A673 (cell line): ENCODE measurements at regions of chr11 and their contacts with region 1.

Region 1: GRCh38 chr11:76680518-76681425 is 10.2 kb upstream of the LRRC32 start:
- DNase-seq: peak; percentile 85
- H3K4me3 ChIP-seq: no peak overlapping the region
- H3K27ac ChIP-seq: no peak overlapping the region
- H3K4me1 ChIP-seq: no peaks in the 10 kb centered on the region
- H3K27me3 ChIP-seq: no peaks in the 10 kb centered on the region
- CTCF ChIP-seq: peak; percentile 96

Region 2: GRCh38 chr11:75896843-75897419 is 783.8 kb before region 1 on chr11:
- CTCF ChIA-PET with region 1: no interaction called
- POLR2A ChIA-PET with region 1: no interaction called
- intact Hi-C with region 1: loop called (anchors 10 kb)
- DNase-seq: peak; percentile 75
- H3K4me3 ChIP-seq: no peak overlapping the region
- H3K27ac ChIP-seq: no peak overlapping the region
- H3K4me1 ChIP-seq: no peaks in the 10 kb centered on the region
- H3K27me3 ChIP-seq: no peaks in the 10 kb centered on the region
- CTCF ChIP-seq: peak; percentile 81

Region 3: DNA sequence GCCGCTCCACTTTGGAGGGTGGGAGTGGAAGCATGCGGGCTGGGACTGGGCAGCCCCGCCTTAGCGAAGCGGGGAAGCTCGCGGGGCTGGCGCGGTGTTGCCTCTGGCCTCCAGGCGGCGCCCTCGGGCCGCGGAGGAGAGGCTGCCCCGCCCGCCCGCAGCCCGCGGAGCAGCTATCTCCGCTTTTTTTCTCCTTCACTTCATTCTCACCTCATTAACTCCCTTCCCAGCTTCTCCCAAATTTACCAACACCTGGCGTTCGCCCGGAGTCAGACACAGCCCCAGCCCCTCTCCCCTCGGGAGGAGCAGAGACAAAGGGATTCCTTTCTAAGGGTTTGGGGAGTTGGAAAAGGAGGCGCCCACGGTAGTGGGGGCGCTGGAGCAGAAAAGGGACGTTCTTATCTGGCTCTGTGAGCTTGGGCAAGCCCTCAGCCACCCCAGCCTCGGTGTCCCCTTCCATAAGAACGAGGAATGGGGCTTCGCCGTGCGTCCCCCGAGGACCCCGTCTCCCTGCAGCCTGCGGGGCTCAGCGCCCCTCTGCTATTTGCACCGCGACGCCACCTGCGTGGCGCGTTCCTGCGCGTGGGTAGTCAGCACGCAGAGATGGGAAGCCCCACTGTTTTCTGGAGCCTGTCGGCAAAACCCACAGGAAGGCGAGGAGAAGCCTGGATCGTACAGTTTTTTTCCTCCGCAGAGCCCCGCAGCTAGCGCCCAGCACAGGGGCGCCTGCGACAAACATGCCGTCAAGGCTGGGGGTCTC is 472.9 kb before region 1 on chr11:
- CTCF ChIA-PET with region 1: interaction called, 4 read pairs
- POLR2A ChIA-PET with region 1: no interaction called
- intact Hi-C with region 1: loop called (anchors 2 kb)
- DNase-seq: peak; percentile 93
- H3K4me3 ChIP-seq: peak overlapping the region; percentile 56
- H3K27ac ChIP-seq: no peak overlapping the region
- H3K4me1 ChIP-seq: peaks cover 34% of the 10 kb centered on the region
- H3K27me3 ChIP-seq: peaks cover 69% of the 10 kb centered on the region
- CTCF ChIP-seq: peak; percentile 93

Region 4: DNA sequence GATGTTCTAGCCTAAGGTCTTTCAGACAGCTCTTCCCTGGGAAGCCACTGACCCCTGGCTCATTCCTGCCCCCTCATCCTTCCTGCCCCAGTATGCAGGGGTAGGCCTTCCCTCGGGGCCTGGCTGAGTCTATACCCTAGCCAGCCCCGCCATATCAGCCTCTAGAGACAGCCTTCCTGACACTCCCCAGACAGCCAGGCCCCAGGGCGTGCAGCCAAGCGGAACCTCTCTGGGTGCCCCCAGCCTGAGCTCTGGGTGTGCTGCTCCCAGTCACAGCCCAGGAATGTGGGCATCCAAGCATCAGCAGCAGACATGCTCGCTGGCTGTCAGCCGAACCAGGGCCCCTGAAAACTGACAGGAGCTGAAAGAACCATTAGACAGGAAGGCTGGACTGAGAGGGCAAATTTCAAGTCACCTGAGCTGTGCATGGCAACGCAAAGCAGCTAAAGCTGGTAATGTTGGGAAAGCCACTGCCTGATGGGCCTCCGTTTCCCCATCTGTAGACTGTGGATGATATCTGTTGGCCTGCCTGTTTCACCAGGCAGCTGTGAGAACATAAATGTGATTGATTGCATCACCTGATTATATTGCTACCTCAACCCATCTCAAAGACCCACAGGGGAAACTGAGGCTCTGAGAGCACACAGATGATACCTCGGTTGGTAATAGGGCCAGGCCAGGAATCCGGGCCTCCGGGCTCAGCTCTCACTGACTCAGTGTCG is 103.4 kb before region 1 on chr11:
- CTCF ChIA-PET with region 1: interaction called, 6 read pairs
- POLR2A ChIA-PET with region 1: no interaction called
- intact Hi-C with region 1: loop called (anchors 10 kb)
- DNase-seq: peak; percentile 79
- H3K4me3 ChIP-seq: no peak overlapping the region
- H3K27ac ChIP-seq: peak overlapping the region; percentile 11
- H3K4me1 ChIP-seq: no peaks in the 10 kb centered on the region
- H3K27me3 ChIP-seq: no peaks in the 10 kb centered on the region
- CTCF ChIP-seq: no peak

Region 5: GRCh38 chr11:77244243-77245027 is 563.7 kb after region 1 on chr11:
- CTCF ChIA-PET with region 1: interaction called, 10 read pairs
- POLR2A ChIA-PET with region 1: no interaction called
- intact Hi-C with region 1: no loop called
- DNase-seq: peak; percentile 89
- H3K4me3 ChIP-seq: no peak overlapping the region
- H3K27ac ChIP-seq: no peak overlapping the region
- H3K4me1 ChIP-seq: peaks cover 6% of the 10 kb centered on the region
- H3K27me3 ChIP-seq: no peaks in the 10 kb centered on the region
- CTCF ChIP-seq: no peak